ENCODE measurements at regions of chr5 and their contacts with region 1.

Region 1: DNA sequence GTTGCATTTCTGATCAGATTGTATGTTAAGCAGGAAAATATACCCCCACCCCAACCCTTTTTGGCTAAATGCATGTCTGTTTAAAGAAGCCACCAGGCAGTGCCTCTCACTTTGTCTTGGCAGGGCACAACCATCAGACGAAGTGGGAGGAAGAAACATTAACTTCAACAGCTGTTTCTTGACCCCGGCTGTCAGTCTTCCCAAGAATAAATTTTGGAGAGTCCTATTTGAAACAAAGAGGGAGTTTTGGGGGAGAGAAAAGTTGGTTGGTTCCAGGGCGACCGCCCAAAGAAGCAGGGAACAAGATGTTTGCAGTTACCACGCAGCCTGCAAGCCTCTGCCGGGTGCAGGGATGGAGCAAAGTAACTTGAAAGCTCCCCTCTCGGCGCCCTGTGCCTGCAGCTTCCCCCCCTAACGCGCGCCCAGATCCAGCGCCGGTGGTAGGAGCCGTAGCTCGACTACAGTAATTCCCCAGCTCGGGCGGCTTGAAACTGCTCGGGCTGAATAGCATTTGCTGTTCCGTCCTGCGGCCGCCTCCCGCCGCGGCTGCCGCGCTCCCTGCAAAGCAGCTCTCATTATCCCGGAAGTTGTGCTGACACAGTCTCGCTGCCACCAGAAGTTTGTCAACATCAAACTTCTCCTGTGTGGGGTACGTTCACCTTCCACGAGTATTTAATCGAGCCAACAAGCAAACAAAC is 100.7 kb upstream of the SSBP2 start:
- DNase-seq: peak; percentile 96 to 98
- ATAC-seq: peak; percentile 85 to 88 (median 86)
- H3K4me3 ChIP-seq: peak overlapping the region; percentile 71
- H3K27ac ChIP-seq: peak overlapping the region; percentile 95
- H3K4me1 ChIP-seq: peaks cover 58% of the 10 kb centered on the region
- H3K27me3 ChIP-seq: no peaks in the 10 kb centered on the region
- CTCF ChIP-seq: no peak

Region 2: DNA sequence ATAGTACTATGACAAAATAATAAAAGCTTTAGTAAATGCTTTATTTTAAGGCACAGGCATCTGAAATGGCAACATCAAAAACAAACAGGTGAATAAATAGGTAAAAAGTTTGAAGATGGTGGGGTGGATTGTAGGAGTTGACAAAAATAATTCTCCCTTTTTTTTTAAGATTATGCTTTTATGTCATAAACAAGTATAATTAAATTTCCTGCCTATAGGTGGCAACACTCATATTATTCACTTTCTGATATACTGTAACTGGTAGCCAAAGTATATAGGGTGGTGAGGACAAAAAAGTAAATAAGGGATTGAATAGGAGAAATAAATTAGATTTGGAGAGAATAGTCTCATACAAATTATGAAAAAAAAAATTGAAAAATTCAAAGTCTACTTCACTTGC is 337.6 kb before region 1 on chr5:
- intact Hi-C with region 1: loop called (anchors 5 kb)
- DNase-seq: no peak
- ATAC-seq: no peak
- H3K4me3 ChIP-seq: no peak overlapping the region
- H3K27ac ChIP-seq: no peak overlapping the region
- H3K4me1 ChIP-seq: no peaks in the 10 kb centered on the region
- H3K27me3 ChIP-seq: no peaks in the 10 kb centered on the region
- CTCF ChIP-seq: peak; percentile 7

Region 3: GRCh38 chr5:81751009-81751835 is 100.4 kb before region 1 on chr5 and contains the start of gene SSBP2:
- intact Hi-C with region 1: loop called (anchors 1 kb)
- DNase-seq: peak; percentile 100
- ATAC-seq: peak; percentile 90 to 95 (median 93)
- H3K4me3 ChIP-seq: peak within 1 kb of the TSS; percentile 86
- H3K27ac ChIP-seq: peak within 1 kb of the TSS; percentile 95
- H3K4me1 ChIP-seq: peaks cover 48% of the 10 kb centered on the region
- H3K27me3 ChIP-seq: no peaks in the 10 kb centered on the region
- CTCF ChIP-seq: no peak
- total RNA-seq, gene SSBP2: 25.3 to 42.6 (median 34.6) TPM

Region 4: GRCh38 chr5:81787474-81788242 is 64.0 kb before region 1 on chr5:
- intact Hi-C with region 1: loop called (anchors 2 to 5 kb)
- DNase-seq: peak in 1 of 2 donors; percentile 31
- ATAC-seq: peak; percentile 40 to 75 (median 46)
- H3K4me3 ChIP-seq: peak overlapping the region; percentile 44
- H3K27ac ChIP-seq: no peak overlapping the region
- H3K4me1 ChIP-seq: peaks cover 22% of the 10 kb centered on the region
- H3K27me3 ChIP-seq: no peaks in the 10 kb centered on the region
- CTCF ChIP-seq: no peak

Region 5: DNA sequence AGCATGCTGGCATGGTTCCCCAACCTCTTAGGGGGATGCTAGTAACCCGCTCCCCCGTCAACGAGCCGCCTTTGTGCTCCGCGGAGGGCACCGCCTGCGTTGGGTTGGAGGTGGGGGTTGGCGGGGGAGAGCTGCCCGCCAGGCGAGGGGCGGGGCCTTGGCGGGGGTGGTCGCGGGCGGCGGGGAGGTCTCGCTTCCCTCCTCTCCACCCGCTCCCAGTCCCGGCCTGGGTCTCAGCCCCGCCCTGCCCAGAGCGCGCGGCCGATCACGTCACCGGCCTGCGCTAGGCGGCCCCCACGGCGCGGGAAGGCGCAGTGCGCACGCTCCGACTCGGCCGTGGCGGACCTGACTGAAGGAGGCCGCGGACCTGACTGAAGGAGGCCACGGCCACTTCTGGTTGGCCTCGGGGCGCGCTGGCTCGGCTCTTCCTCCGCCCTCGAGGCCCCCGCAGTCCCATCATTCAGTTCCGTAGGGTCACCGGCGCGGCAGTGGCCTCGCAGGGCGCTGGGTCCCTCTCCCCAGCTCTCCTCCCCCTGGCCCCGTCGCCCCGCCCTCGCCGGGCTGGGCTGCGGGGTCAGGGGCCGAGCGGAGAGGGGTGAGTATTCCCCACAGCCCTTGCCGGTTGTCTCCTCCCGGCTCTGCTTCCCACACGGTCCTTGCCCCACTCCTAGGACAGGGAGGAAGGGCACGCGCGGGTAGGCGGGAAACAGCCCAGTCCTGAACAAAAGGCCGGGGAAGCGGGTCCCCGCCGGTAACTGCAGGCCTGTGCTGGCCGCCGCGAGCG is 120.3 kb after region 1 on chr5 and contains the start of gene ATG10:
- intact Hi-C with region 1: loop called (anchors 5 kb)
- DNase-seq: peak; percentile 92 to 95
- ATAC-seq: peak; percentile 97 to 99 (median 98)
- H3K4me3 ChIP-seq: peak within 1 kb of the TSS; percentile 80
- H3K27ac ChIP-seq: peak within 1 kb of the TSS; percentile 97
- H3K4me1 ChIP-seq: no peaks in the 10 kb centered on the region
- H3K27me3 ChIP-seq: no peaks in the 10 kb centered on the region
- CTCF ChIP-seq: no peak
- total RNA-seq, gene ATG10: 4.6 to 7.4 (median 6.2) TPM

Region 6: DNA sequence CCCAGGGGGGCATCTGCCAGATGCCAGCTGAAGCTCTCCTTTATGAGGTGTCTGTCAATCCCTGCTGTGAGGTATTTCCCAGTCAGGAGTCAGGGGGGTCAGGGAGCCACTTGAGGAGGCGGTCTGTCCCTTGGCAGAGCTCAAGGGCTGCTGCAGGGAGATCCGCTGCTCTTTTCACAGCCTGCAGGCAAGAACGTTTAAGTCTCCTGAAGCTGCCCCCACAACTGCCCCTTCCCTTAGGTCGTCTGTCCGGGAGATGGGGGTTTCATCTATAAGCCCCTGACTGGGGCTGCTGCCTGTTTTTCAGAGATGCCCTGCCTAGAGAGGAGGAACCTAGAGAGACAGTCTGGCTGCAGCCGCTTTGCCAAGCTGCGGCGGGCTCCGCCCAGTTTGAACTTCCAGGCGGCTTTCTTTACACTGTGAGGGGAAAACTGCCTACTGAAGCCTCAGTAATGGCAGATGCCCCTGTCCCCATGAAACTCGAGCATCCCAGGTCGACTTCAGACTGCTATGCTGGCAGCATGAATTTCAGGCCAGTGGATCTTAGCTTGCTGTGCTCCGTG is 278.2 kb after region 1 on chr5:
- intact Hi-C with region 1: no loop called
- DNase-seq: no peak
- ATAC-seq: no peak
- H3K4me3 ChIP-seq: no peak overlapping the region
- H3K27ac ChIP-seq: no peak overlapping the region
- H3K4me1 ChIP-seq: no peaks in the 10 kb centered on the region
- H3K27me3 ChIP-seq: no peaks in the 10 kb centered on the region
- CTCF ChIP-seq: no peak